ENCODE measurements at regions of chr14 and their contacts with region 1.

Region 1: GRCh38 chr14:65287264-65288131 is 125.0 kb upstream of the FUT8 start:
- DNase-seq: peak; percentile 75
- H3K4me3 Mint-ChIP-seq: peak overlapping the region; percentile 77
- H3K27ac Mint-ChIP-seq: peak overlapping the region; percentile 98
- H3K4me1 Mint-ChIP-seq: peaks cover 79% of the 10 kb centered on the region
- H3K27me3 Mint-ChIP-seq: no peaks in the 10 kb centered on the region

Region 2: GRCh38 chr14:65302571-65303189 is 15.2 kb after region 1 on chr14:
- CTCF ChIA-PET with region 1: interaction called, 11 read pairs
- POLR2A ChIA-PET with region 1: interaction called, 4 read pairs
- DNase-seq: peak; percentile 37
- H3K4me3 Mint-ChIP-seq: no peak overlapping the region
- H3K27ac Mint-ChIP-seq: peak overlapping the region; percentile 87
- H3K4me1 Mint-ChIP-seq: peaks cover 64% of the 10 kb centered on the region
- H3K27me3 Mint-ChIP-seq: no peaks in the 10 kb centered on the region

Region 3: GRCh38 chr14:65412032-65412846 is 124.7 kb after region 1 on chr14 and contains the start of gene FUT8:
- CTCF ChIA-PET with region 1: interaction called, 7 read pairs
- POLR2A ChIA-PET with region 1: interaction called, 14 read pairs
- DNase-seq: peak; percentile 96
- H3K4me3 Mint-ChIP-seq: peak within 1 kb of the TSS; percentile 92
- H3K27ac Mint-ChIP-seq: peak within 1 kb of the TSS; percentile 96
- H3K4me1 Mint-ChIP-seq: peaks cover 44% of the 10 kb centered on the region
- H3K27me3 Mint-ChIP-seq: no peaks in the 10 kb centered on the region
- total RNA-seq, gene FUT8: 70.9 to 79.2 TPM

Measured in activated CD4-positive, alpha-beta T cell treated with anti-CD3 and anti-CD28 coated beads, Interleukin-2, amount 10 ng/mL, durations not matched to agents 7 days and 5 days (primary cell).